ENCODE measurements at regions of chr12 and their contacts with region 1.

Region 1: DNA sequence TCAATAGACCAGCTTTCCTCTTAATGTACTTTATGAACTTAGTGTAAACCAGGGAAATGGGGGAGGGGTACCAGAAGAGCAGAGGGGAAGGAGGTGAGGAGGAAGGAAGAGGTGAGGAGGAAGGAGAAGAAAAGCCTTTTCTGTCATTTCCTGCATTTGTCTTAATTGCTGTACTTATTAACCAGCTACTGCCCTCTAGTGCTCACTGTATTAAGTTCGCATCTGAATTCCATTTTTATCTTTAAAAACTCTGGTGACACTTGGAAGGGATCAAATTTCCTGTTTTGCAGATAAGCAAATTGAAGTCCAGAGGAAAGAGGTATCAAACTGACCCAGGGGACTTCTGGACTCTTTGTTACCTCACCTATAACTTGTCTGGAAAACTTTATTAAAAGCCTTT is 22.2 kb downstream of the MANSC1 start:
- DNase-seq: peak; percentile 29
- H3K4me3 ChIP-seq: no peak overlapping the region
- H3K27ac ChIP-seq: no peak overlapping the region
- H3K4me1 ChIP-seq: no peaks in the 10 kb centered on the region
- H3K27me3 ChIP-seq: no peaks in the 10 kb centered on the region
- CTCF ChIP-seq: peak; percentile 70 to 73

Region 2: GRCh38 chr12:11705010-11705409 is 622.8 kb before region 1 on chr12:
- CTCF ChIA-PET with region 1: no interaction called
- dilution Hi-C with region 1: no loop called
- in situ Hi-C with region 1: no loop called
- intact Hi-C with region 1: no loop called
- DNase-seq: peak; percentile 91
- H3K4me3 ChIP-seq: no peak overlapping the region
- H3K27ac ChIP-seq: peak overlapping the region; percentile 71
- H3K4me1 ChIP-seq: peaks cover 32% of the 10 kb centered on the region
- H3K27me3 ChIP-seq: no peaks in the 10 kb centered on the region
- CTCF ChIP-seq: no peak

Region 3: GRCh38 chr12:12039897-12040296 is 287.9 kb before region 1 on chr12:
- CTCF ChIA-PET with region 1: no interaction called
- dilution Hi-C with region 1: no loop called
- in situ Hi-C with region 1: no loop called
- intact Hi-C with region 1: loop called (anchors 1 kb)
- DNase-seq: no peak
- H3K4me3 ChIP-seq: no peak overlapping the region
- H3K27ac ChIP-seq: no peak overlapping the region
- H3K4me1 ChIP-seq: no peaks in the 10 kb centered on the region
- H3K27me3 ChIP-seq: no peaks in the 10 kb centered on the region
- CTCF ChIP-seq: no peak

Region 4: DNA sequence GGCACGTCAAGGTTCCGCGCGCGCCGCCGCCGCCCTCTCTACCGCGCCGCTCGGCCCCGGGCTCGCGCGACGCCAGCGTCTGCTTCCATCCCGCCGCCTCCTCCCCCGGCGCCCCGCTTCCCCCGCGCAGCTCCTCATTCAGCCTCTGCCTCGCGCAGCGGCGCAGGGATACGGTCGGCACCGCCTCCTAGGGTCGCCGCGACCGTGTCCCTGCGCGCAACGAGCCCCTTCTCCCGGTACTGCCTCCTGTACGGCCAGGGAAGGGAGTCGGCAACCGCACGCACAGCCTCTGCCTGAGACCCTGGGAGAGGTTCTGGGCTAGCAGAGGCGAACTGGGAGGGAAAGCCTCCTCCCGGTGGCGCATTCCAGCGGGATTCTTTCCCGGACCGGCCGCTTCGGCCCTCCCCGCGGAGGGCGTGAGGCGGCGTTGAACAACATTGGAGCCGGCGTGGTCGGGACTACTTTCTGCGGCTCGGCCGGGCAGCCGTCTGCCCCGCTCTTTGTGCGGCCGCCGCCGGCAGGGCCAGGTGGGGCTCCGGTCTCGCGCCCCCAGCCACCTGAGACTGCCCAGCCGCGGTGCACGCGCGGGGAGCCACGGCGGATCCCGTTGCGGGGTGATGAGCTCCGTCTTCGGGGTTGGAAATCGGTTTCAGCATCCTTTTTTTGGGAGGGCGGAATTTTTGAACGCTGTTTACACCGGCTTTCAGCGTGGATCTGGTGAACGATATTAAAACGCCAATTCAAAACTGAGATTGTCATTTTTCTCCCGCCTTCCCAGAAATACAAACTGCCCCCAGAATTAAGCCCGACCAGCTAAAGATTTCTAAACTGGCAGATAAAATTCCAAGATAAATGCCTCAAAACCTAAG is 60.7 kb before region 1 on chr12 and contains the start of gene LRP6:
- CTCF ChIA-PET with region 1: no interaction called
- dilution Hi-C with region 1: no loop called
- in situ Hi-C with region 1: no loop called
- intact Hi-C with region 1: loop called (anchors 5 kb)
- DNase-seq: peak; percentile 94
- H3K4me3 ChIP-seq: peak within 1 kb of the TSS; percentile 89 to 98 (median 95)
- H3K27ac ChIP-seq: peak within 1 kb of the TSS; percentile 99
- H3K4me1 ChIP-seq: peaks cover 18% of the 10 kb centered on the region
- H3K27me3 ChIP-seq: no peaks in the 10 kb centered on the region
- CTCF ChIP-seq: no peak
- total RNA-seq, gene LRP6: 19.2 to 27.7 TPM

Region 5: DNA sequence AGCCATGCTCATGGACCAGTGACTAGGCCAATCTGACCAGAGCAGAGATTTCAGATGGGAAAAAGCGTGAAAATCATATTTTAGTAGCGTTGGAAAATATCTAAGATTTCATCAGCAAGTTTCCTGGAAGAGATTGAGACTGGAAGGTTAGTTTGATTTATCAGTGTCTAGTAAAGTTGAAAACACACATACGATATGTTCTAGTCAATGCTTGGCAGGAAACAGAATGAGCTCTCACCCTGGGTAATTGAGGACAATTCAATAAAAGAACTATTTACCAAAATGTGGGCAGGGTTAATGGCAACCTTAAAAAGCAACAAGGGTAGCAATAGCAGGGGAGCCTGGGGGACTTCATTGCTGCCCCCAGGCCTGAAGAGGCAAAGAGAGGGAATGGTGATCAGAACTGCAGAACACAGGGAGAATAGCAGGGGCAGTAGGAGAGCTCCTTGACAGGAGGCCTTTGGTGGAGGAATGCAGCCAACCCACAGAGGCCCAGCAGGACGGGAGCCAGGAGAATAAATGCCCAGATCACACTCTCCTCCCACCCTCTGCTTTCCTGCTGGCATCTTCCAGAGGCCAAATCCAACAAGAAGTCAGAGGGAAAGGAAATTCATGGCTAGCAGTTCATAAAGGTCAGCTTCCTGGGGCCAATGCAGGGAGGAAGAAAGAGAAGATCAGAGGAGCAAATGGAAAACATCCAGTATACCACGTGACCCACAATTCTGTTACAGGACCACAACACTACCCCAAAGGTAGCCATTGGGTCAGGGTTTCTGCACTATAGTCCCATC is 33.4 kb before region 1 on chr12:
- CTCF ChIA-PET with region 1: no interaction called
- dilution Hi-C with region 1: no loop called
- in situ Hi-C with region 1: no loop called
- intact Hi-C with region 1: no loop called
- DNase-seq: no peak
- H3K4me3 ChIP-seq: no peak overlapping the region
- H3K27ac ChIP-seq: no peak overlapping the region
- H3K4me1 ChIP-seq: no peaks in the 10 kb centered on the region
- H3K27me3 ChIP-seq: no peaks in the 10 kb centered on the region
- CTCF ChIP-seq: no peak

Measured in mammary epithelial cell (primary cell).